OCI-LY7 (cell line): ENCODE measurements at regions of chr2 and their contacts with region 1.

Region 1: DNA sequence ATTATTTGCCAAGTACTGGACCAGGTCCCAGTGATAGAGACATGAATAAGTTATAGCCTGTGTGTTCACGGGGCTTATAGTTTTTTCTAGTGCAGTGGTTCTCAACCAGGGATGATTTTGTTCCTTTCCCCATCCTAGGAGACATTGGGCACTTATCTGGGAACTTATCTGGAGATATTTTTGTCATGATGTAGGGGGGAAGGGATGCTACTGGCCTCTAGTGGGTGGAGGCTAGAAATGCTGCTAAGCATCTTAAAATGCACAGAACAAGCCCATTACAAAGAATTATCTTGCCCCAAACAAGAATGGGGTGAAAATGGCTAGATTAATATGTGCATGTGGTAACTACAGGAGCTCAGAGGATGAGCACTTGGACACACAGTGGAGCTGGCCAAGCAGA is 75.2 kb downstream of the KLHL29 start:
- DNase-seq: peak; percentile 4
- H3K4me3 ChIP-seq: no peak overlapping the region
- H3K27ac ChIP-seq: no peak overlapping the region
- H3K4me1 ChIP-seq: no peaks in the 10 kb centered on the region
- CTCF ChIP-seq: peak; percentile 79

Region 2: DNA sequence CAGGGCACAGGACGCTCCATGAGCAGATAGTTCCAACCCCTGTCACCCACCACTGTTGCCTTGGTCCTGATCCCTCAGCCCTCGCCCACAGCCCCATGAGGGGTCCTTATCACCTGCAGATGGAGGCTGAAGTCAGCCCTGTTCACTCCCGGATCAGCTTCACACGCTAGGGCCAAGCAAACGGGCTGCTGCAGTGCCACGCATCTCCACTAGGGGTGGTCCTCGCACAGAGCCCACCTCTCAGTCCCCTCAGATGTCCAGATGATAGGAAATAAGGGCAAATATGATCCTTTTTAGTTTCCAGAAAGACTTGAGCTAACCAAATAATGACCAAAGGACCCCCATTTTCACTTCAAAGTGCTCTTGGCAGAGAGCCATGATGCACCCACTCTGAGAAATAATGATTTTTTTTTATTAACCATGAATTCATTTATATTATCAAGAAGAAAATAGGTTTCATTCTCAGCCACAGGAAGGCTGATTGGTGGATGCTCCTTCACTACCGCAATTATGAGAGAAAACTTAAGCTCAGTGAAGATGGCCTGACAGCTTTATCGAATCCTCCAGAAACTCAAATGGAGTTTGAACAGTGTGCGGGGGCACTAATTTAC is 147.1 kb before region 1 on chr2:
- CTCF ChIA-PET with region 1: no interaction called
- POLR2A ChIA-PET with region 1: no interaction called
- intact Hi-C with region 1: loop called (anchors 10 kb)
- DNase-seq: peak; percentile 42
- H3K4me3 ChIP-seq: no peak overlapping the region
- H3K27ac ChIP-seq: no peak overlapping the region
- H3K4me1 ChIP-seq: no peaks in the 10 kb centered on the region
- CTCF ChIP-seq: peak; percentile 85

Region 3: GRCh38 chr2:24625728-24626127 is 1165.5 kb after region 1 on chr2:
- CTCF ChIA-PET with region 1: no interaction called
- POLR2A ChIA-PET with region 1: interaction called, 10 read pairs
- intact Hi-C with region 1: no loop called
- DNase-seq: no peak
- H3K4me3 ChIP-seq: no peak overlapping the region
- H3K27ac ChIP-seq: no peak overlapping the region
- H3K4me1 ChIP-seq: no peaks in the 10 kb centered on the region
- CTCF ChIP-seq: no peak